GM10248 (cell line): ENCODE measurements at regions of chr3 and their contacts with region 1.

Region 1: DNA sequence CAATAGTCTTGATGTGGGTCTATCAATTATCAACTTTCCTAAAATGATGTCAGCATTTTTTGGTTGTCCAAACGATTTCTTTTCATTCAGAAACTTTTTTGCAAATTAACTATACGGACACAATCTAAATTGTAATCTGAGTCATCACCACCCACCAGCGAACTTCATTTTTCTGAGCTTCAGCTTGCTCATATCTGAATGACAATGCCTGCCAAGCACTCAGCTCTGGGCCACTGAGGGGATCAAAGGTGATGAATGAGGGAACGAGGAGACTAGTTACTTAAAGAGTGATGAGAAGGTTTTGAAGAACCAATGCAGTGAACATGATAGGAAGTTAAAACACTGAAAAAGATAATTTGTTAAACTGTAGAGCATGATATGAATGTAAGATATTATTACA is 14.9 kb upstream of the TBC1D23 start:
- DNase-seq: no peak
- CTCF ChIP-seq: no peak

Region 2: DNA sequence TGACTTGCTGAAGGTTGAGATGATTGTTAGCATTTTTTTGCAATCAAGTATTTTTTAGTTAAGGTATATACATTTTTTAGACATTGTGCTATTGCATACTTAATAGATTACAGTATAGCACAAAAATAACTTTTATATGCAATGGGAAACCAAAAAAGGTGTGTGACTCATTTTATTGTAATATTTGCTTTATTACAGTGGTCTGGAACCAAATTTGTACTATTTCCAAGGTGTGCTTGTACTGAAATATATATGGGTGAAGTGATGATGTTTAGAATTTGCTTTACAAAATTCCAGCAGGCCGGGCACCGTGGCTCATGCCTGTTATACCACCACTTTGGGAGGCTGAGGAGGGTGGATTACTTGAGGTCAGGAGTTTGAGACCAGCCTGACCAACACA is 14.3 kb before region 1 on chr3:
- CTCF ChIA-PET with region 1: interaction called, 10 read pairs
- POLR2A ChIA-PET with region 1: no interaction called
- DNase-seq: no peak
- CTCF ChIP-seq: no peak